HepG2 (cell line): ENCODE measurements at regions of chr19 and their contacts with region 1.

Region 1: DNA sequence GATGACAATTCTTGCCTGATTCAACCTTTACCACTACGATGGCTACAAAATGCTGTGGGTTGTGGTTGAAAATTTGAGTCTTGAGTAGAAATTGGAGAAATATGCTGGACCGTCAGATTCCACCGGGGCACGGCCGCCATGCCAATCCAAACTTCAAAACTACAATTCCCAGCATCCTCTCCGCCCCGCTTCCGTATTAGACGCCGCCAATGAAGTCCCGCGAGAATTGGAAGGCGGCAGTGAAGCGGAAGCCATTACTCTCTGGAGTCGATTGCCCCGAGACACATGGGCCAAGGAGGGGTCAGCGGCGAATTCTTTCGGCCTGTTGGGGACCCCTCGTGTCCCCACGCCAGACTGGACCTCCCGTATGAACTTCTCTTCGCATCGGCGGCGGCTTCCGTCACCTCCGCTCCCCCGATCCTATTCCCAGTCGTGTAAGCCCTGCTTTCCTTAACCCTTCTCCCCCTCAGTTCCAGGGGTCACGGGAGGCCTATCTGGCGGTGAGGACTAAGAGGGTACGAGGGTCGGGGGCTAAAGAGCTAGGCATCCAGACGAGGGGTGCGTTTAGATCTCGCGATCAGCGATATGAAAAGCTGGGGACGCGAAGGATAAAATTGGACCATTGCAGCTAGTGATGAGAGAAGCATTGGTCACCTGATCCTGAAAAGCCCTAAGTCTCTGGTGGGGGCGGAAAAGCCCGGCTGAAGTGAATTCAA is at the start of gene ZNF317:
- DNase-seq: peak; percentile 91
- ATAC-seq: peak; percentile 96
- H3K4me3 ChIP-seq: peak within 1 kb of the TSS; percentile 63 to 98 (median 95)
- H3K27ac ChIP-seq: peak within 1 kb of the TSS; percentile 80
- H3K4me1 ChIP-seq: peaks cover 20% of the 10 kb centered on the region
- H3K27me3 ChIP-seq: no peaks in the 10 kb centered on the region; a peak in 1 of 5 replicates
- CTCF ChIP-seq: 0 out of 2 replicates have a peak, but pooled peaks have one; percentile 8
- EP300 ChIP-seq: no peak
- POLR2A ChIP-seq: peak; percentile 90 to 92
- RAD21 ChIP-seq: no peak
- total RNA-seq, gene ZNF317: 27.9 and 31.0 TPM in 2 replicates

Region 2: DNA sequence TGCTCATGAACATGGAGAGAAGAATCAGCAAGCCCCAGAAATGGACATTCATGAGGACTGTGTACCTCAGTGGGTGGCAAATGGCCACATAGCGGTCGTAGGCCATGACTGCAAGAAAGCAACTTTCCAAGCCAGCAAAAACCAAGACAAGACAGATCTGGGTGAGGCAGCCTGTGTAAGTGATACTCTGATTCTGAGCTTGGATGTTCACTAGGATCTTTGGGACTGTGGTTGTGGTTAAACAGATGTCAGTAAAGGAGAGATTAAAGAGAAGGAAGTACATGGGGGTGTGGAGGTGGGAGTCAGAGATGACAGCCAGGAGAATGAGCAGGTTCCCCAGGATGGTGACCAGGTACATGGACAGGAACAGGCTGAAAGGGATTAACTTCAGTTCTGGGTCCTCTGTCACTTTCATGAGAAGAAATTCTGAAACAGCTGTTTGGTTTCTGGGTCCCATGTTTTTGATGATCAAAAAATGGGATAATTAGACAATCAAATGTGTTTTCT is 25.0 kb before region 1 on chr19 and contains the start of gene OR7G1:
- CTCF ChIA-PET with region 1: no interaction called
- POLR2A ChIA-PET with region 1: no interaction called
- in situ Hi-C with region 1: no loop called
- intact Hi-C with region 1: no loop called
- DNase-seq: no peak
- ATAC-seq: no peak
- H3K4me3 ChIP-seq: no peak within 1 kb of the TSS
- H3K27ac ChIP-seq: no peak within 1 kb of the TSS
- H3K4me1 ChIP-seq: peaks cover 5% of the 10 kb centered on the region
- H3K27me3 ChIP-seq: no peaks in the 10 kb centered on the region
- CTCF ChIP-seq: no peak
- EP300 ChIP-seq: no peak
- POLR2A ChIP-seq: no peak
- RAD21 ChIP-seq: no peak
- total RNA-seq, gene OR7G1: not detected in 2 replicates

Region 3: GRCh38 chr19:9309139-9309973 is 169.0 kb after region 1 on chr19 and contains the start of gene ZNF699:
- CTCF ChIA-PET with region 1: interaction called, 4 read pairs
- POLR2A ChIA-PET with region 1: no interaction called
- in situ Hi-C with region 1: no loop called
- intact Hi-C with region 1: loop called (anchors 2 kb)
- DNase-seq: peak; percentile 87
- ATAC-seq: peak; percentile 87
- H3K4me3 ChIP-seq: peak within 1 kb of the TSS; percentile 71 to 77 (median 74)
- H3K27ac ChIP-seq: peak within 1 kb of the TSS; percentile 68
- H3K4me1 ChIP-seq: peaks cover 6% of the 10 kb centered on the region; the same call in 1 of the 2 replicates
- H3K27me3 ChIP-seq: no peaks in the 10 kb centered on the region
- CTCF ChIP-seq: no peak
- EP300 ChIP-seq: no peak
- POLR2A ChIP-seq: peak in 1 of 2 experiments; percentile 56; a peak in 1 of 4 replicates
- RAD21 ChIP-seq: no peak
- total RNA-seq, gene ZNF699: 2.2 and 2.7 TPM in 2 replicates

Region 4: GRCh38 chr19:9435279-9436268 is 295.3 kb after region 1 on chr19 and contains the start of gene ZNF266:
- CTCF ChIA-PET with region 1: no interaction called
- POLR2A ChIA-PET with region 1: no interaction called
- in situ Hi-C with region 1: no loop called
- intact Hi-C with region 1: loop called (anchors 10 kb)
- DNase-seq: peak; percentile 85
- ATAC-seq: peak; percentile 95
- H3K4me3 ChIP-seq: peak within 1 kb of the TSS; percentile 87 to 97 (median 95)
- H3K27ac ChIP-seq: peak within 1 kb of the TSS; percentile 88
- H3K4me1 ChIP-seq: peaks cover 21% of the 10 kb centered on the region
- H3K27me3 ChIP-seq: no peaks in the 10 kb centered on the region; a peak in 1 of 5 replicates
- CTCF ChIP-seq: peak; percentile 52
- EP300 ChIP-seq: no peak
- POLR2A ChIP-seq: peak; percentile 65 to 79
- RAD21 ChIP-seq: no peak
- total RNA-seq, gene ZNF266: 12.8 and 19.8 TPM in 2 replicates

Region 5: DNA sequence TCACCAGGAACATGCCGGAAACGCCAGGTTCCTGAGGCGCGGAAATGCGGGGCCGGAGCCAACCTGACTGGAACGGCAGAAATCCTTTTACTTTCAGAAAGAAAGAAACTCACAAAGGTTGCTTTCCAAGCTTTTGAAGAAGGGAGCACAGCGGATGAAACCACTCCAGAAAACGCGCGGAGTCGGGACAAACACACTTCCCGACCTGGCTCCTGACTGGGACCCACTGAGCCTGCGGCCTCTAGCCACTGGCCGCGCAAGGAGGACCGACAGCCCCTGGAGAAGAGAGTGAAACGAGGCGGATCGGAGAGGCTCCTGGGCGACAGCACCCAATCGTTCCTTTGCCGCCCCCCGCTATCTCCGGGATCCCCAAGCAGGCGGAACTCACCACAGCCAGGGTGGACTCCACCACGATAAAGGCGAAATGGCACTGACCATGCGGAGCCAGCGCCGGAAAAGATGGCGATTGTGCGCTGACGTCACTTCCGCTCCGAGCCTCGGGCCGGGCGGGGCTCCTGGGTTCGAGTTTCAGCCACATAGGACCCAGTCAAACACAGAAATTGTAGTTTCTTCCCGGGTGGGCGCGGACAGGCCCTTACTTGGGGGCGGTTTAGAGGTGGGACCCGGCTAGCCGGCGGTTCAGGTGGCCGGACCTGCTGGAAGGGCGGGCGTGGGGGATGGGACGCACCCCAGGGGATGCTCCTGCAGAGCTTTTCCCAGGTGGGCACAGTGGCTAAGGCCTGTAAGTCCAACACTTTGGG is 443.9 kb after region 1 on chr19 and contains the start of gene ZNF121:
- CTCF ChIA-PET with region 1: no interaction called
- POLR2A ChIA-PET with region 1: no interaction called
- in situ Hi-C with region 1: no loop called
- intact Hi-C with region 1: loop called (anchors 10 kb)
- DNase-seq: peak; percentile 77
- ATAC-seq: peak; percentile 91
- H3K4me3 ChIP-seq: peak within 1 kb of the TSS; percentile 78 to 92 (median 79)
- H3K27ac ChIP-seq: peak within 1 kb of the TSS; percentile 85
- H3K4me1 ChIP-seq: peaks cover 39% of the 10 kb centered on the region
- H3K27me3 ChIP-seq: no peaks in the 10 kb centered on the region; a peak in 1 of 5 replicates
- CTCF ChIP-seq: peak; percentile 3; the same call in 1 of the 2 replicates
- EP300 ChIP-seq: no peak
- POLR2A ChIP-seq: peak; percentile 93 to 95
- RAD21 ChIP-seq: no peak
- total RNA-seq, gene ZNF121: 56.3 and 78.4 TPM in 2 replicates